Gastrocnemius medialis (tissue), 4 donors: ENCODE measurements at regions of chr13 and their contacts with region 1.

Region 1: DNA sequence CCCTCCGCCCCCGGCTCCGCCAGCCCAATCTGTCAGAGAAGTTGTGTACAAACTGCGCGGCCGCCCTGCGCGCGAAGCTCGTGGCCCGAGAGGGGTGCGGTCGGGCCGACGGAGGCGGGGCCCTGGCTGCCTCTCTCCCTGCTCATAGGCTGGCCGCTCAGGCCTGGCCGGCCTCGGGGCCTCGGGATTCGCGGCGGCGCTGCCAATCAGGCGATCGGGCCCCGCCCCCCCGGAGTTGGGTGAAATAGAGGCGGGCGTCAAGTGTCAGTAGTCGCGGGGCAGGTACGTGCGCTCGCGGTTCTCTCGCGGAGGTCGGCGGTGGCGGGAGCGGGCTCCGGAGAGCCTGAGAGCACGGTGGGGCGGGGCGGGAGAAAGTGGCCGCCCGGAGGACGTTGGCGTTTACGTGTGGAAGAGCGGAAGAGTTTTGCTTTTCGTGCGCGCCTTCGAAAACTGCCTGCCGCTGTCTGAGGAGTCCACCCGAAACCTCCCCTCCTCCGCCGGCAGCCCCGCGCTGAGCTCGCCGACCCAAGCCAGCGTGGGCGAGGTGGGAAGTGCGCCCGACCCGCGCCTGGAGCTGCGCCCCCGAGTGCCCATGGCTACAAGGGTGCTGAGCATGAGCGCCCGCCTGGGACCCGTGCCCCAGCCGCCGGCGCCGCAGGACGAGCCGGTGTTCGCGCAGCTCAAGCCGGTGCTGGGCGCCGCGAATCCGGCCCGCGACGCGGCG is at the start of gene KLF5:
- DNase-seq: peak; percentile 96 to 98
- ATAC-seq: peak; percentile 86 to 90
- H3K4me3 ChIP-seq: peak within 1 kb of the TSS; percentile 76 to 89 (median 84)
- H3K27ac ChIP-seq: peak within 1 kb of the TSS; percentile 90 to 94 (median 92)
- H3K4me1 ChIP-seq: peaks cover 5 to 8% of the 10 kb centered on the region in 2 donors
- H3K27me3 ChIP-seq: peaks cover 0 to 7% (median 0%) of the 10 kb centered on the region in 3 donors
- CTCF ChIP-seq: no peak
- POLR2A ChIP-seq: peak; percentile 99 to 100
- total RNA-seq, gene KLF5: 9.8 to 15.6 (median 10.9) TPM

Region 2: DNA sequence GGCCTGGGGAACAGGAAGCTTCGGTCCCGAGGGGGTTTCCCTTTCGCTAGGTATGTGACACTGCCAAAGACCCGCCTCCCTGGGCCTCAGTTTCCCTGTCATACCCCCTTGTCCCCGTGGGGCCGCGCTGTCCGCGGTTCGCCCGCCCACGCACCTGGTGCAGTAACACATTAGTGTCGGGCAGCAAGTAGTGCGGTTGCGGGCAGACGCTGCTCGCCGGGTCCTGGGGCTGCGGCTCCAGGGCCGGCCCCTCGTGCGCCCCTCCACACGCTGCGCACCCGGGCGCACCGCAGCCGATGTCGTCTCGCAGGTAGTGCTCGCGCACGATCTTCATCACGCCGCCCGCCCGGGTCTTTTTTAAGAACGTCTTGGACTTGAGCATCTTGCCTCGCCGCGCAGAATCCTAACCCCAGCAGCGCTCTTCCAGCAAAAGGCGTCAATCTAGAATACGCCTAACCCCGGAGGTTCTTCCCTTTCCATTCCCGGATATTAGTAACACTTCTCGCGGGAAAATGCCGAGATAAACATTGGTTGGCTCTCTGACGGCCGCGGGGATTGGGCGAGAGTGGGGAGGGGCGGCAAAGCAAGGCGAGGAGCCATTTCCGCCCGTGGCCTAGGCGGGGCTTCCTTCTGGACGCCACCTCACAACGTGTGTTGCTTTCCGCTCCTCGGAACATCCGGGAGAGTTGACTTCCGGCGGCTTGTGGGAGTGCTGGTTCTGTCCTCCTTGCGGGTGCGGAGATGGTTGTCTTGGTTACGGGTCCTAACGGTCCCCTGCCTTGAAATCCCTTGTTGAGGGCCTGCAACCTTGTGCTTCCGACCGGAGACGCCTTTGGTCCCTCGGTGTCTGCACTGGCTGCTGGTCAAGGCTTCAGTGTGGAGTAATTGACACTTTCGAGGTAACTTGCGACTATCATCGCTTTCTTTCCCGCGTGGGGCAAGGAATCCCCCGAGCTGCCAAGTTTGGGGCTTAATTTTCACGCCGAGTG is 277.2 kb before region 1 on chr13 and contains the starts of genes DIS3 and PIBF1:
- in situ Hi-C with region 1: no loop called
- intact Hi-C with region 1: loop called (anchors 10 kb)
- DNase-seq: peak; percentile 96
- ATAC-seq: peak; percentile 99 to 100
- H3K4me3 ChIP-seq: peak within 1 kb of the TSS; percentile 76 to 89 (median 86)
- H3K27ac ChIP-seq: peak within 1 kb of the TSS; percentile 86 to 91 (median 88)
- H3K4me1 ChIP-seq: peaks cover 26 to 27% of the 10 kb centered on the region in 2 donors
- H3K27me3 ChIP-seq: no peaks in the 10 kb centered on the region
- CTCF ChIP-seq: peak in 2 of 5 experiments; percentile 13 to 23
- POLR2A ChIP-seq: peak; percentile 77 to 83
- total RNA-seq, gene DIS3: 11.6 to 17.6 (median 17.0) TPM
- total RNA-seq, gene PIBF1: 5.3 to 10.0 (median 7.4) TPM

Region 3: DNA sequence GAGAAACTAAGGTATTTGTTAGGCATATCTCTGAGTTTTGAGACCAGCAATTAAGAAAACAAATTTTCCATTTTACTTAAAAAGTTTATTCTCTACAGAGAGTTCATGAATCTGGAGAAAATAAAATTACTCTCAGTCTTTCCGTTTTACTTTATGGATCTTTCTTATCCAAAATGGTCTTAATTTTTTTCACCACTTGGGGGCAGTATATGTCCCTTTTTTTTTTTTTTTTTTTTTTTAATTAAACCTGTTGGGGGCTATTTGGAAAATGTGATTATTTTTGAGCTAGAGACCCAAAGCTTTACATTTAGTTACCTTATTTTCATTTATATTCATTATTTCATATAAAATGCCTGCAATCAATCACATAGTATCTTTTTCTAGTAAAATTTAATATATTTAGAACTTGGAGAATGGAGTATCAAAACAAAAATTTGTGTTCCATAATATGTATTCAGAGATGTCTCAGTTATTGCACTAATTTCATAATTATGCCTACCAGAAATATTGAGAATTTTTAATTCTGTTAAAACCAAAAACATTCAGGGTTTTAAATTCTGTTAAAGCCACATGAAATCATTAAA is 249.9 kb before region 1 on chr13:
- in situ Hi-C with region 1: loop called in 1 of 4 experiments (anchors 25 kb)
- intact Hi-C with region 1: no loop called
- DNase-seq: no peak
- ATAC-seq: no peak
- H3K4me3 ChIP-seq: no peak overlapping the region
- H3K27ac ChIP-seq: no peak overlapping the region
- H3K4me1 ChIP-seq: no peaks in the 10 kb centered on the region
- H3K27me3 ChIP-seq: no peaks in the 10 kb centered on the region
- CTCF ChIP-seq: peak in 3 of 5 experiments; percentile 34 to 69 (median 46)
- POLR2A ChIP-seq: no peak

Region 4: GRCh38 chr13:72920097-72920496 is 138.8 kb before region 1 on chr13:
- in situ Hi-C with region 1: no loop called
- intact Hi-C with region 1: loop called (anchors 5 kb)
- DNase-seq: peak; percentile 56 to 83
- ATAC-seq: peak; percentile 100
- H3K4me3 ChIP-seq: no peak overlapping the region
- H3K27ac ChIP-seq: peak overlapping the region; percentile 48 to 74 (median 70)
- H3K4me1 ChIP-seq: peaks cover 9 to 11% of the 10 kb centered on the region in 2 donors
- H3K27me3 ChIP-seq: no peaks in the 10 kb centered on the region
- CTCF ChIP-seq: no peak
- POLR2A ChIP-seq: no peak

Region 5: GRCh38 chr13:73481886-73482445 is 423.1 kb after region 1 on chr13:
- in situ Hi-C with region 1: no loop called
- intact Hi-C with region 1: loop called (anchors 2 kb)
- DNase-seq: peak; percentile 35 to 63
- ATAC-seq: peak; percentile 81 to 86
- H3K4me3 ChIP-seq: peak overlapping the region in 1 of 4 donors; percentile 1
- H3K27ac ChIP-seq: peak overlapping the region; percentile 71 to 85 (median 82)
- H3K4me1 ChIP-seq: peaks cover 21 to 38% of the 10 kb centered on the region in 2 donors
- H3K27me3 ChIP-seq: no peaks in the 10 kb centered on the region
- CTCF ChIP-seq: no peak
- POLR2A ChIP-seq: no peak

Region 6: DNA sequence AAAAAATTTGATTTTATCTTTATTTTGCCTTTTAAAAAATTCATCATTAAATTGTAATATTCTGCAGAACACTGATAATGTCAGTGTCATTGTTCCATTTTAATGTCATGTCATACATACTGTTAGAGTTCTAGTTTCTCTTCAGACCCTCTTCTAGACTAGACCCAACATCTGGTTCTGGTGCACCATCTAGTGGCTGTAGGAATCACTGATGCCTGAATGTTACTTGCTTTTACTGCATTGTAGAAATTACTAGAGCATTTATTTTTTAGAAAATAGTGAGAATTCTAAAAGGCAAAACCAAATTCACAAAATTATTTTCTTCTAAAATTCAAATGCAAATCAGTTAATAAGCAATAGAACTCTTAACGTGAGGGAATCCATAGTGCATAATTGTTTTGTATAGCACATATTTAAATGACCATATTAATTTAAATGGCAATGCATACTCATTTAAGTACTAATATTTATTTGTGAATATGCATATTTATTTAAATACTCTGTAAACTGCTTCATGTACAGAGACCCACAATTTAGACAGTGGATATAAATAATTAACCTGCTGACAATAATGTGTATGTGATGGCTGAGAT is 649.6 kb after region 1 on chr13:
- in situ Hi-C with region 1: loop called in 3 of 4 experiments (anchors 5 to 25 kb)
- intact Hi-C with region 1: loop called (anchors 2 kb)
- DNase-seq: peak in 1 of 2 donors; percentile 27
- ATAC-seq: peak; percentile 47 to 97
- H3K4me3 ChIP-seq: no peak overlapping the region
- H3K27ac ChIP-seq: no peak overlapping the region
- H3K4me1 ChIP-seq: peaks cover 0 to 7% of the 10 kb centered on the region in 2 donors
- H3K27me3 ChIP-seq: no peaks in the 10 kb centered on the region
- CTCF ChIP-seq: peak; percentile 46 to 88 (median 74)
- POLR2A ChIP-seq: no peak